ENCODE measurements at regions of chr16 and their contacts with region 1.

Region 1: GRCh38 chr16:58629572-58630104 is at the start of gene CNOT1:
- DNase-seq: peak; percentile 90
- ATAC-seq: peak; percentile 79
- H3K4me3 Mint-ChIP-seq: peak within 1 kb of the TSS; percentile 99
- H3K27ac Mint-ChIP-seq: peak within 1 kb of the TSS; percentile 100
- H3K4me1 Mint-ChIP-seq: peaks cover 35% of the 10 kb centered on the region
- H3K27me3 Mint-ChIP-seq: no peaks in the 10 kb centered on the region
- CTCF ChIP-seq: no peak
- total RNA-seq, gene CNOT1: 243 and 266 TPM in 2 replicates

Region 2: GRCh38 chr16:58000706-58001676 is 628.6 kb before region 1 on chr16 and contains the start of gene USB1:
- CTCF ChIA-PET with region 1: no interaction called
- POLR2A ChIA-PET with region 1: interaction called, 5 read pairs
- intact Hi-C with region 1: loop called (anchors 10 kb)
- DNase-seq: peak; percentile 97
- ATAC-seq: peak; percentile 84
- H3K4me3 Mint-ChIP-seq: peak within 1 kb of the TSS; percentile 94
- H3K27ac Mint-ChIP-seq: peak within 1 kb of the TSS; percentile 92
- H3K4me1 Mint-ChIP-seq: peaks cover 42% of the 10 kb centered on the region
- H3K27me3 Mint-ChIP-seq: no peaks in the 10 kb centered on the region
- CTCF ChIP-seq: no peak
- total RNA-seq, gene USB1: 37.4 and 40.7 TPM in 2 replicates

Region 3: GRCh38 chr16:58243528-58244004 is 386.1 kb before region 1 on chr16:
- CTCF ChIA-PET with region 1: no interaction called
- POLR2A ChIA-PET with region 1: no interaction called
- intact Hi-C with region 1: loop called (anchors 1 kb)
- DNase-seq: no peak
- ATAC-seq: peak; percentile 90
- H3K4me3 Mint-ChIP-seq: peak overlapping the region; percentile 69
- H3K27ac Mint-ChIP-seq: peak overlapping the region; percentile 89
- H3K4me1 Mint-ChIP-seq: peaks cover 33% of the 10 kb centered on the region
- H3K27me3 Mint-ChIP-seq: peaks cover 2% of the 10 kb centered on the region
- CTCF ChIP-seq: no peak

Region 4: DNA sequence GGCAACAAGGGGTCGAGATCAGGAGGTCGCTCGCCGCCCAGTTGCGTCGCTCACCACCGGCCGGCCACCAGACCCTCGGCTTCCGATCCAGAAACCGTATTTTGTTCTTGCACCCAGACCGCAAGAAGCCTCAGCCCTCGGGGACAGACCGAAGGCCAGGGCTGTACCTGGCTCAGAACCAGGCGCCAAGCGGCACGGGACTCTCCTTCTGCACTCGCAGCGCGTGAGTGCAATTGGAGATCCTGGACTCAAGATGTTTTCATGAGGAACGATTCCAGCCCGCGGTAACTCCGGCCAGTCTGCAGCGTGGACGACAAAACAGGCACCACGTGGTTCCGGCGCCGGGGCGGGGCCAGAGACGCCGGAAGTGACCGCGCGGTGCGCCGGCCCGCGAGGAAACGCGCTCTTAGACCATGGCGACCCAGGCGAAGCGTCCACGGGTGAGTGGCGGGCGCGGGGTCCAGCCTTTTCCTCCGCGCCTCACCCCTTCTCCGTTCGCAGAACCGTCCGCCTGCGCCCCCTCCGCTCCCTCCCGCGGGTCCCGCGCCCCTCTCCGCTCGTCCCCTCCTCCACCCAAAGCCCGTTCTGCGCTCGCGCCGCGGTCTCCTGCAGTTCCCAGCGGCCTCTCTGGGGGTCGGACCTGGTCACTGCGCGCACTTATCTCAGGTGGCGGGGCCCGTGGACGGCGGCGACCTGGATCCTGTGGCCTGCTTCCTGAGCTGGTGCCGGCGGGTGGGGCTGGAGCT is 114.3 kb before region 1 on chr16 and contains the start of gene SETD6:
- CTCF ChIA-PET with region 1: interaction called, 4 read pairs
- POLR2A ChIA-PET with region 1: interaction called, 7 read pairs
- intact Hi-C with region 1: loop called (anchors 1 kb)
- DNase-seq: peak; percentile 81
- ATAC-seq: peak; percentile 77
- H3K4me3 Mint-ChIP-seq: peak within 1 kb of the TSS; percentile 91
- H3K27ac Mint-ChIP-seq: peak within 1 kb of the TSS; percentile 84
- H3K4me1 Mint-ChIP-seq: peaks cover 24% of the 10 kb centered on the region
- H3K27me3 Mint-ChIP-seq: no peaks in the 10 kb centered on the region
- CTCF ChIP-seq: no peak
- total RNA-seq, gene SETD6: 25.6 and 31.1 TPM in 2 replicates

Region 5: DNA sequence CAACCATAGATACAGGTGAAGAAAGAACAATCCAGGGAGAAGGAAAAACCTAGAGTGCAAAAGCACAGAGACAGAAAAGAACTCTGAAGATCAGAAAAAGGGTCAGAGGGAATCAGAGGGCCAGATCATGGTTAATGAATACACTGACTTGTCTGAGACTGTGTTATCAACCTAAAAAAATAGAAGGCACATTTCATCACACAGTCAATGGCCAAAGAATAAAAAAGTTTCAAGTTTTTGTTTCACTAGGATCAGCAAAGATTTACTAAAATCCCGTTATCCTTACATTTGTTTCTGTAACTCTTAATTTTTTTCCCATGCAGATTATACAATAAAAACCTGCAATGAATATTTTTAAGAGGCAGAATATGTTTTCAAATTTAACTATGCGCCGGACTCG is 38.6 kb before region 1 on chr16:
- CTCF ChIA-PET with region 1: no interaction called
- POLR2A ChIA-PET with region 1: no interaction called
- intact Hi-C with region 1: loop called (anchors 5 kb)
- DNase-seq: no peak
- ATAC-seq: no peak
- H3K4me3 Mint-ChIP-seq: no peak overlapping the region
- H3K27ac Mint-ChIP-seq: no peak overlapping the region
- H3K4me1 Mint-ChIP-seq: peaks cover 9% of the 10 kb centered on the region
- H3K27me3 Mint-ChIP-seq: no peaks in the 10 kb centered on the region
- CTCF ChIP-seq: no peak

Region 6: GRCh38 chr16:58684354-58685083 is 54.9 kb after region 1 on chr16 and contains the start of gene SLC38A7:
- CTCF ChIA-PET with region 1: no interaction called
- POLR2A ChIA-PET with region 1: interaction called, 19 read pairs
- intact Hi-C with region 1: loop called (anchors 1 kb)
- DNase-seq: peak; percentile 63
- ATAC-seq: peak; percentile 93
- H3K4me3 Mint-ChIP-seq: peak within 1 kb of the TSS; percentile 94
- H3K27ac Mint-ChIP-seq: peak within 1 kb of the TSS; percentile 82
- H3K4me1 Mint-ChIP-seq: peaks cover 20% of the 10 kb centered on the region
- H3K27me3 Mint-ChIP-seq: peaks cover under 1% of the 10 kb centered on the region
- CTCF ChIP-seq: no peak
- total RNA-seq, gene SLC38A7: 14.5 and 18.8 TPM in 2 replicates

Region 7: DNA sequence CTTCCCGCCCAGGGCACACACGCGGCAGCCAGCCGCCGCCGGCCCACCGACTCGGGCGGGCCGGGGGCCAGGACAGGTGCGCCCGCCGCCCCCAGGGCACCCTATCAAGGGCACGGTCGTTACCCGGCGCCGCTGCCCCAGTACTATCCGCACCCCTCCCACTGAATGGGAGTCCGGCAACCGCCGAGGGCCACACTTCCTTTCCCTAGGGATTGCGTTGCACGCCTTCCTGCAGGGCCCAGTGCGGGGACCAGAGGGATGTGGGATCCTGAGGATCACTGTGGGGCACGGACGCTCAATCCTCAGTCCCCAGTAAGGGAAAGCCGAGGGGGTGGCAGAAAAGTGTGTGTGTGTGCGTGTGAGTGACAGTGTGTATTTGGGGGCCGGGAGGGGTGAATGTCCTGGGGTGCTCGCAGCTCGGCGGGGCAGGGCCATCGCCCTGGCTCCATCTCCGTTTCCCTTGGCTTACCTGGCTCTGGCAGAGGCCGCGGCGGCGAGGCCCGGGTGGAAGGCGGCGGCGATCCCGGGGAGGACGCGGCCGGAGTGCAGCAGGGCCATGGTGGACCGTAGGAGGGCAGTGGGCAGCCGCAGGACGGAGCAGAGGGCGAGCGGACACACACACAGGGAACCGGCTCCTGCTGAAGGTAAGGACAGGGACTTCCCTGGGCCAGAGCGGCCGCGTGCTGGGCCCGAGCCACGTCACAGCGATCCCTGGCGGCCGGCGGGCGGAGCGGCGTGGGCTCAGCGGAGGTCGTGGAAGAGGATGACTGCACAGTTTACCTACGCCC is 104.2 kb after region 1 on chr16 and contains the start of gene GOT2:
- CTCF ChIA-PET with region 1: no interaction called
- POLR2A ChIA-PET with region 1: no interaction called
- intact Hi-C with region 1: loop called (anchors 1 kb)
- DNase-seq: peak; percentile 77
- ATAC-seq: peak; percentile 95
- H3K4me3 Mint-ChIP-seq: peak within 1 kb of the TSS; percentile 98
- H3K27ac Mint-ChIP-seq: peak within 1 kb of the TSS; percentile 62
- H3K4me1 Mint-ChIP-seq: peaks cover 36% of the 10 kb centered on the region
- H3K27me3 Mint-ChIP-seq: no peaks in the 10 kb centered on the region
- CTCF ChIP-seq: no peak
- total RNA-seq, gene GOT2: 53.6 and 59.2 TPM in 2 replicates